PC-9 (cell line): ENCODE measurements at regions of chr14 and their contacts with region 1.

Region 1: DNA sequence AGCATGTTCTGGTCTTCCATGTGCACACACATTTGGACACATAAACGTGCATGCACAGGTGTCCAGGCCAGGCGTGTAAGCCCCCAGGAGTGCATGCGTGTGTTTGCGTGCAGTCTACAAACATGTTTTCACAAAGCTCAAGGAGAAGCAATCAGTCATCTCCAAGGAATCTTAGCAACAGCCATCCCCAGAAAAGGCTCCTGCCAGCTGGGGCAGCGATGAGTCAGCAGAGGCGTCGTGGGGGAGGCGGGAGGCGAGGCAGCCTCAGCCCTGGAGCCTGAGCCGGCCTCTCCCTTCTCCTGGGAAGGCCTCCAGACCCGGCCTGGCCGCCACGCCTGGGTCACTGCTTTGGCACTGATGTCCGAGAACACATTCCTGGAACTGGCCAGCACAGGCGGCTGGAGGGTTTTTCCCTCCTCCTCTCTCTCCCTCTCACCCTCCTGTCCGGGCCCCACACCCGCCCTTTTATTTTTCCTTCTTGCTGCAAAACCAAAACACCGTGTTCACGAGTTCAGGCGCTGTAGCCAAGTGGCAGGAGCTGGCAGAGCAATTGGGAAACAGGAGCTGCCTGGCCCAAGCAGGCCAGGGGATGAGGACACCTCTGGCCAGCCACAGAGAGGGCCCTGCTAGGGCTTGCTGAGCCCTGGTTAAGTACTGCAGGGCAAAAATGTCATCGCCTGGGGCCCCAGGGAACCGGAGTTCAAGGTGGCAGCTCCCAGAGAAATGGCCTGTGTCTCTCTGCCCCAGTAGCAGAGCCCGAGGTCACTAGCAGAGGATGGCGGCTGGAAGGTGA is 92.7 kb downstream of the LRRC74A start:
- DNase-seq: peak; percentile 98 to 100
- H3K4me3 ChIP-seq: peak overlapping the region; percentile 20; the same call in 1 of the 2 replicates
- H3K27ac ChIP-seq: peak overlapping the region; percentile 91
- H3K4me1 ChIP-seq: peaks cover 79% of the 10 kb centered on the region
- H3K27me3 ChIP-seq: no peaks in the 10 kb centered on the region
- CTCF ChIP-seq: peak; percentile 43; the same call in 1 of the 2 replicates

Region 2: DNA sequence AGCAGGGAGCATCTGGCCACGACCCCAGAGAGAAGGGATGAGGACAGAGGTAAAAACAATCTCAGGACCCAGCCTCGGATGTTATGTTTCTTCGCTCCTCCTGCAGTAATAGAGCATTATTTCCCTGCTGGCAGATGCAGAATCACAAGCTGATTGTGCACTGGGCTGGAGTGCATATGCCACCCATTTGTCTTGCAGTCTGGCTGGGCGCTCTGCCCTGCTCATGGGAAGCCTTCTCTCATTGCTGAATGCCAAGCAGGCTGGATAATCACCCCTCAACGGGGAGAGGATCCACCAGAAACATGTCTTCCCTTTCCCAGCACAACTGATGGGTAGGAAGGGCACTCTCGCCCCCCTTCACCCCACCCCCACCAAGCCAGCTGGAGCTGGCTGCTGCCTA is 166.2 kb before region 1 on chr14:
- CTCF ChIA-PET with region 1: no interaction called
- POLR2A ChIA-PET with region 1: no interaction called
- intact Hi-C with region 1: no loop called
- DNase-seq: no peak
- H3K4me3 ChIP-seq: no peak overlapping the region
- H3K27ac ChIP-seq: no peak overlapping the region
- H3K4me1 ChIP-seq: no peaks in the 10 kb centered on the region
- H3K27me3 ChIP-seq: peaks cover 74% of the 10 kb centered on the region
- CTCF ChIP-seq: no peak

Region 3: DNA sequence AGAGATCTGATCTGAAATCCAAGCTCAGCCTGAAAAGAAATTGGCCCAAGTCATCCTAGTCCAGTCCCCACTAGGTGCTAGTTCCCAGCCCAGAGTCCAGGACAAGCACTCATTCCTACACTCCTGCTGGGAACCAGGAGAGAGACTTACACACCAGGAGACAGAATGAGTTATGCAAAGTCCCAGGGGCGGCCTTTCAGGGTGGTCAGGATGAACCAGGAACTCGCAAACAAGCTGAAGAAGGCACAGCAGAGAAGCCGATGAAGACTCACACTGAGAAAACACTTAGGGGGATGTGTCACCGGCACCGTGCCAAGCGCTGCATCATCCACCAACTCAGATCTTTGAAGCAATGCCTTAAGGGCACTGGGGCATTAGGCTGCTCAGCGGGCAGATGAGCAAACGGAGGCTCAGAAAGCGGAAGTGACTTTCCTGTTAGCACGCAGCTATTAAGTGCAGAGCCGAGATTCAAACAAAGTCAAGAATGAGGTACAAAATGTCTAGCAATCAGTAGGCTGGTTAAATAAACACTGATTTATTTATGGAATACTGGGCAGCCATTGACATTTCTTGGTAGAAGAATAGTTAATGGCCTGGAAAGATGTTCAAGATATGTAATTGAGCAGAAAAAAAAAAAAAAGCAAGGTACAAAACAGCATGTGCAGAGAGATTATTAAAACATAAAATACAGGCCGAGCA is 14.1 kb before region 1 on chr14:
- CTCF ChIA-PET with region 1: interaction called, 8 read pairs
- POLR2A ChIA-PET with region 1: interaction called, 15 read pairs
- intact Hi-C with region 1: no loop called
- DNase-seq: peak; percentile 98 to 100
- H3K4me3 ChIP-seq: peak overlapping the region; percentile 9; the same call in 1 of the 2 replicates
- H3K27ac ChIP-seq: peak overlapping the region; percentile 80
- H3K4me1 ChIP-seq: peaks cover 34% of the 10 kb centered on the region
- H3K27me3 ChIP-seq: no peaks in the 10 kb centered on the region
- CTCF ChIP-seq: no peak

Region 4: GRCh38 chr14:76968621-76969063 is 49.7 kb after region 1 on chr14:
- CTCF ChIA-PET with region 1: interaction called, 12 read pairs
- POLR2A ChIA-PET with region 1: interaction called, 3 read pairs
- intact Hi-C with region 1: no loop called
- DNase-seq: no peak
- H3K4me3 ChIP-seq: no peak overlapping the region
- H3K27ac ChIP-seq: no peak overlapping the region
- H3K4me1 ChIP-seq: peaks cover 5% of the 10 kb centered on the region
- H3K27me3 ChIP-seq: no peaks in the 10 kb centered on the region
- CTCF ChIP-seq: no peak

Region 5: GRCh38 chr14:77023001-77023996 is 104.4 kb after region 1 on chr14:
- CTCF ChIA-PET with region 1: interaction called, 5 read pairs
- POLR2A ChIA-PET with region 1: interaction called, 16 read pairs
- intact Hi-C with region 1: loop called (anchors 1 kb)
- DNase-seq: peak in 1 of 2 experiments; percentile 61
- H3K4me3 ChIP-seq: peak overlapping the region; percentile 64
- H3K27ac ChIP-seq: peak overlapping the region; percentile 17
- H3K4me1 ChIP-seq: peaks cover 40% of the 10 kb centered on the region
- H3K27me3 ChIP-seq: no peaks in the 10 kb centered on the region
- CTCF ChIP-seq: no peak

Region 6: GRCh38 chr14:77040059-77040740 is 121.3 kb after region 1 on chr14:
- CTCF ChIA-PET with region 1: interaction called, 7 read pairs
- POLR2A ChIA-PET with region 1: no interaction called
- intact Hi-C with region 1: loop called (anchors 1 kb)
- DNase-seq: peak; percentile 99
- H3K4me3 ChIP-seq: peak overlapping the region; percentile 41
- H3K27ac ChIP-seq: peak overlapping the region; percentile 85
- H3K4me1 ChIP-seq: peaks cover 95% of the 10 kb centered on the region
- H3K27me3 ChIP-seq: no peaks in the 10 kb centered on the region
- CTCF ChIP-seq: no peak

Region 7: DNA sequence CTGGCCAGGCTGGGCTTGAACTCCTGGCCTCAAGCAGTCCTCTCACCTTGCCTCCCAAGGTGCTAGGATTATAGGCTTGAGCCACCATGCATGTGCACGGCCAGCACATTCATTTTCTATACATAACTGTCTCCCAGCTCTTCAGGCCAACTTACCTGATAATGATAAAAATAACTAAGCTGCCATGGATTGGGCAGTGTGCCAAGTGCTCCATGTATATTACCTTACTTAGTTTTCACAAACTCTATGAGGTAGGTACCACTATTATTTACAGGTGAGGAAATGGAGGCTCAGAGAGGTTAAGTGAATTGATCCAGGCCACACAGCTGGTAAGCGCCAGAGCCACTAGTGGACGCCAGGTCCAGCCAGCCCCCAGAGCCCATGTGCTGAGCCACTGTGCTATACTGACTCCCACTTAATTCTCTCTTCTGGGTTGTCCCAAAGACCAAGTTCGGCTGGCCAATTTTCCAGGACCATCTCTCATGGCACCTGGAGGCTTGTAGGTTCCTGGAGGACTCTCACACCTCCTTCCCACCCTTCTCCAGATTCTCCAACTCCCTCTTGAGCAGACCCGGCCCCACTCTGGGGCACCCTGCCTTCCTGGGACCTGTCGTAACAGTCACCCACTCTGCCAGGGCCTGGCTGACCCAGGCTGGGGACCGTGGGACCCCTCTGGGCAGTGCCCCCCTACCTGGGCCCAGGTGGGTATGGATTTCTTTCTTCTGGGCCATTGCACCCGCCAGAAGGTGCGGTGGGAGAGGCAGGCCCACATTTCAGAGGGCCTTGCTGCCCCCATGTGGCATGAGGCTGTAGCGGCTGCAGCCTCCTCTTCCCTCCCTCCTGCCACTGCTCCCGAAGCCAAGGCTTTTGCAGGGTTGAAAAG is 148.9 kb after region 1 on chr14:
- CTCF ChIA-PET with region 1: interaction called, 63 read pairs
- POLR2A ChIA-PET with region 1: interaction called, 4 read pairs
- intact Hi-C with region 1: no loop called
- DNase-seq: peak; percentile 74 to 93
- H3K4me3 ChIP-seq: no peak overlapping the region
- H3K27ac ChIP-seq: no peak overlapping the region
- H3K4me1 ChIP-seq: peaks cover 54% of the 10 kb centered on the region
- H3K27me3 ChIP-seq: no peaks in the 10 kb centered on the region
- CTCF ChIP-seq: peak; percentile 100

Region 8: GRCh38 chr14:77111043-77111442 is 192.1 kb after region 1 on chr14:
- CTCF ChIA-PET with region 1: interaction called, 5 read pairs
- POLR2A ChIA-PET with region 1: interaction called, 11 read pairs
- intact Hi-C with region 1: no loop called
- DNase-seq: peak; percentile 76 to 93
- H3K4me3 ChIP-seq: no peak overlapping the region
- H3K27ac ChIP-seq: peak overlapping the region; percentile 21; the same call in 1 of the 2 replicates
- H3K4me1 ChIP-seq: peaks cover 5% of the 10 kb centered on the region; the same call in 1 of the 2 replicates
- H3K27me3 ChIP-seq: no peaks in the 10 kb centered on the region
- CTCF ChIP-seq: no peak